Heart right ventricle (tissue), 16 donors: ENCODE measurements at regions of chr18 and their contacts with region 1.

Region 1: GRCh38 chr18:69400253-69400975 is at the start of gene DOK6:
- DNase-seq: peak; percentile 64 to 67
- ATAC-seq: peak; percentile 82 to 89 (median 88)
- H3K4me3 ChIP-seq: peak within 1 kb of the TSS; percentile 40 to 71 (median 66)
- H3K27ac ChIP-seq: peak within 1 kb of the TSS; percentile 61 to 85 (median 80)
- H3K4me1 ChIP-seq: peaks cover 0 to 16% (median 0%) of the 10 kb centered on the region in 9 donors
- H3K27me3 ChIP-seq: peaks cover 0 to 50% (median 12%) of the 10 kb centered on the region in 7 donors
- CTCF ChIP-seq: no peak
- total RNA-seq, gene DOK6: 2.3 to 12.5 (median 5.1) TPM

Region 2: DNA sequence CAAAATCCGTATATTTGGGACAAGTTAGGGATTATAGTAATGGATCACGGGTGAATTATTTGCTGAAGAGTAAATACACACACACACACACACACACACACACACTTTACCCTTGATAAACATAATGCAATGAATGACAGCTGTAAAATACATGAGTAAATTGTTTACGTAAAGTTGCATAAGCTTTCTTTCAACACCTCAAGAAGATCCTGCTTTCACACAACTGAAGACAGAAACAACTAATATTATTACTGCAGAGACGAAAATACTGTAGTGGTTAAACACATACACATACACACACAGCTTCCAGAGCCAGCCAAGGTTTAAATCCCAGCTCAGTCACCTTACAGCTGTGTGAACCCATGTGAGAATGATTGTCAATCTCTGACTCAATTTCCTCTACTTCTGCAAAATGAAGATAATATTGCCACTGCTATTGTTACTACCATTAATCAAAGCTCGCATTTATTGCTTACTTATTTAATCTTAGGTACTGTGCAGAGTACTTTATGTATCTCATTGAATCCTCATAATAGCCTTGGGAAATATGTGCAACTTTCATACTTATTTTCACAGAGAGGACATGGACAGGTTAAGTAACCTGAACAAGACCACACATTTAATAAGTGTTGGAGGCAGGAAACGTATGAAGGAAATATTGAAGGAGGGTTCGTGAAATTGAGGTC is 50.4 kb before region 1 on chr18:
- intact Hi-C with region 1: loop called in 1 of 10 experiments (anchors 10 kb)
- DNase-seq: no peak
- ATAC-seq: no peak
- H3K4me3 ChIP-seq: no peak overlapping the region
- H3K27ac ChIP-seq: no peak overlapping the region
- H3K4me1 ChIP-seq: no peaks in the 10 kb centered on the region
- H3K27me3 ChIP-seq: no peaks in the 10 kb centered on the region
- CTCF ChIP-seq: no peak

Region 3: DNA sequence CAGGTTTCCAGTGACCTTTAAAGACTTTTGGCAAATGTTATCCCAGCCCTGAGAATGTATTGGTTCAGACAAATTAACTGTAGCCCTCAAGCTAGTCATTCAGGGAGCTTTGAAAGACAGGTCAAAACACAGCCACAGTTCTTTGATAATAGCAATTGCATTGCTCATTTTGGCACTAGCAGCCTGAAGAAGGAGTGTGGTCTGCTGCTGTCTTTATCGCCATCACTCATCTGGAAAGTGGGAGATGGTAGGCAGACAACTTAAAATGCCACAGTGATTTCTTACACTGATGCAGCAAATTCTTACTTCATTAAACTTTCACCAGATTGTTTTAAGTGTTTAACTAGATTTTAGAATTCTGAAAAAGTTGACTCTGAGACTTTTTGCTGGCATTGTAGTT is 47.5 kb after region 1 on chr18:
- intact Hi-C with region 1: loop called in 1 of 10 experiments (anchors 5 kb)
- DNase-seq: no peak
- ATAC-seq: no peak
- H3K4me3 ChIP-seq: no peak overlapping the region
- H3K27ac ChIP-seq: no peak overlapping the region
- H3K4me1 ChIP-seq: no peaks in the 10 kb centered on the region
- H3K27me3 ChIP-seq: no peaks in the 10 kb centered on the region
- CTCF ChIP-seq: no peak